SK-N-SH (cell line): ENCODE measurements at regions of chr1 and their contacts with region 1.

Region 1: DNA sequence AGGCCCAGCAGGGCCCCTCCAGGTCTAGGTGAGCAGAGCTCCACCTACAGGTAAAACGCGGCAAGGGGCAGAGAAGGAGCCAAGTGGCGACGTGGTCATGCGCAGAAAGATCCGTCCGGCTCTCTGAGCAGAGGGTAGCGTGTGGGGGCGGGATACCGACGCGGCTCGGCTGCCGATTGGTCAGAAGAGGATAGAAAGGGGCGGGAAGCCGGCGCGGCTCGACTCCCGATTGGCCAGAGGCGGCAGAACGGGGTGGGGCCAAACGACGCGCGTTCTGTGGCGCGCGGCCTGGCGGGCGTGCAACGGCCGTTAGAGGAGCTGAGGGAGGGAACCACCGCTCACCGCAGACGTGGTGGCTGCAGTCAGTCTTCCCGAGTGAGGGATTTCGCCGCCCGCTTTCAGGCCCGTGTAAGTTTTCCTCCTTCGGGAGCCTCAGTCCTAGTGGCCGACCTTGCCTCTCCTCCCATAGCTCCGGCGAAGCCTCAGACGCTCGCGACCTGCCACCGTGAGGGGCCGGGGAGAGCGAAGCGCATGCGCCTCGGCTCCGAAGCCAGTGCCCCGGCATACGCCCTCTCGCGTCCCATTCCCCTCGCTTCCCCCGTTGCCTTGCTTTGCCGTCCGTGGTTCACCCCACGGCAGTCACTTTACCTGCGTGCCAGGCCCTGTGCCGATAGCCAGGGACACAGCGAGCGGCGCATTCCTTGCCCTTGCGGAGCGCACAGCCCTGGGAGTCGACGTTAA is at the start of gene CEP85:
- DNase-seq: peak; percentile 99
- H3K4me3 ChIP-seq: peak within 1 kb of the TSS; percentile 86 to 99
- H3K27ac ChIP-seq: peak within 1 kb of the TSS; percentile 72 to 86
- H3K4me1 ChIP-seq: peaks cover 6 to 10% of the 10 kb centered on the region in 2 experiments; a peak in 2 of 4 replicates
- H3K27me3 ChIP-seq: no peaks in the 10 kb centered on the region
- CTCF ChIP-seq: peak; percentile 83
- EP300 ChIP-seq: no peak
- RAD21 ChIP-seq: peak; percentile 69
- polyA plus RNA-seq, gene CEP85: 12.1 and 16.6 TPM in 2 replicates

Region 2: DNA sequence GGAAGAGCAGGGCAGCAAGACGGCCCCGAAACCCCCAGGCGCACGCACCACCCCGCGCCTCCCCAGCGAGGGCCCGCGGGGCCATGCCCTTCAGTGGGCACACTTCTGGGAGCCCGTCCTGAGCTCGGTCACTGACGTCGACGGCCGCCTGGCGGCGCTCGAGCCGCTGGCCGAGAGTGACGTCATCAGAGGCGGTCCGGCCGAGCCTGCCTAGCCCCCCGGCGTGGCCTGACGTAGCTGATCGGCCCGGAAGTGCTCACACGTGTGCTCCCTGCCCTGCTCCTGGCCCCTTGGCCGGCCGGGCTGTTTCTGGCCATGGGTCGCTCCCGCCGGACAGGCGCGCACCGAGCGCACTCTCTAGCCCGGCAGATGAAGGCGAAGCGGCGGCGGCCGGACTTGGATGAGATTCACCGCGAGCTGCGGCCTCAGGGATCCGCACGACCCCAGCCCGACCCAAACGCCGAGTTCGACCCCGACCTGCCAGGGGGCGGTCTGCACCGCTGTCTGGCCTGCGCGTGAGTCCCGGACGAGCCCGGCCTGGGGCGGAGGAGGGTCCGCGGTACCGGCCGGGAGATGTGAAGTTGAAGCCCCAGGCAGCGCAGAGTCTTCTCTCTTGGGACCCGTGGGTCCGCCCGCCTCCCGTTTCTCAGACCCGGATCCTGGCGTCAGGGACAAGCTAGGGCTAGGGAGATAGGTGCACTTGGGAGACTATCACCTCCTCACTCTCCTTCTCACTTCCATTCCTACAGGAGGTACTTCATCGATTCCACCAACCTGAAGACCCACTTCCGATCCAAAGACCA is 64.2 kb before region 1 on chr1 and contains the start of gene ZNF593:
- CTCF ChIA-PET with region 1: interaction called, 28 read pairs
- POLR2A ChIA-PET with region 1: interaction called, 3 read pairs
- DNase-seq: peak; percentile 99
- H3K4me3 ChIP-seq: peak within 1 kb of the TSS; percentile 85 to 98
- H3K27ac ChIP-seq: peak within 1 kb of the TSS; percentile 48 to 54; a peak in 3 of 4 replicates
- H3K4me1 ChIP-seq: peaks cover 0 to 18% of the 10 kb centered on the region in 2 experiments; a peak in 2 of 4 replicates
- H3K27me3 ChIP-seq: no peaks in the 10 kb centered on the region
- CTCF ChIP-seq: peak; percentile 78
- EP300 ChIP-seq: no peak
- RAD21 ChIP-seq: peak; percentile 47; the same call in 1 of the 2 replicates
- polyA plus RNA-seq, gene ZNF593: 58.7 and 64.8 TPM in 2 replicates

Region 3: GRCh38 chr1:26203642-26204318 is 30.3 kb before region 1 on chr1:
- CTCF ChIA-PET with region 1: interaction called, 12 read pairs
- POLR2A ChIA-PET with region 1: no interaction called
- DNase-seq: no peak
- H3K4me3 ChIP-seq: no peak overlapping the region
- H3K27ac ChIP-seq: no peak overlapping the region
- H3K4me1 ChIP-seq: no peaks in the 10 kb centered on the region
- H3K27me3 ChIP-seq: no peaks in the 10 kb centered on the region; the same call in 1 of the 2 replicates
- CTCF ChIP-seq: no peak
- EP300 ChIP-seq: no peak
- RAD21 ChIP-seq: no peak

Region 4: DNA sequence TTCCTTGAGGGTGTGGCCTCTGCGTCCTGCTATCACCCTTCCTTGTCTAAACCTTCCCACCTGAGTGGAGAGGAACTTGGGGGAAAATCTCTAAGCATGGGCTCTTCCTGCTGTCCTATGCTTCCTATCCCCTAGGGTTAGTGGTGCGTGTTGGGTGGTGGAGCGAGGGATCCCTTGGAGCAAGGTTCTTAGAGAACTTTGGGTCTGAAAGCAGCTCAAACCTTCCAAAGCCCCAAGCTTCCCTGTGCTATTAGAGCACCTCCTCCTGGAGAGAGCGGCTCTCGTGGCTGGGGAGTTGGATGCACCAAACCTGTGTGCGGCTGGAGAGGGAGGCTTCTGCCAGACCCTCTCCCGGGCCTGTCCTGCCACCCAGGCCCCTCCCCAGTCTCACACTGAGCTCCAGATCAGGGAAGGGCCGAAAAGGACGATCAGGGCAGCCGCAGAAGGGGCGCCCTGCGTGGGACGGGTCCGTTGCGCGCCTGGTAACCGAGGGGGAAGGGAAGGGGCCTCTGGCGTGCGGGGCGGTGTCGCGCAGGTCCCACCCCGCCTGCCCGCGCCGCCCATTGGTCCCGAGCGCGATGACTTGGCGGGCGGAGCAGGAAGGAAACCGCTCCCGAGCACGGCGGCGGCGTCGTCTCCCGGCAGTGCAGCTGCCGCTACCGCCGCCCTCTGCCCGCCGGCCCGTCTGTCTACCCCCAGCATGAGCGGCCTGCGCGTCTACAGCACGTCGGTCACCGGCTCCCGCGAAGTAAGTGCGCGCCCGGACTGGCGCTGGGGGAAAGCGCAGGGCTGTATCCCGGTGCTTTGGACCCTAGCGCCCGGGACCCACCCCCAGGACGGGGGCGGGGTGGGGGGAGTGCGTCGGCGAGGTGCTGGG is 45.6 kb after region 1 on chr1 and contains the start of gene SH3BGRL3:
- CTCF ChIA-PET with region 1: interaction called, 13 read pairs
- POLR2A ChIA-PET with region 1: no interaction called
- DNase-seq: peak; percentile 96
- H3K4me3 ChIP-seq: peak within 1 kb of the TSS; percentile 85 to 95
- H3K27ac ChIP-seq: peak within 1 kb of the TSS; percentile 76 to 87
- H3K4me1 ChIP-seq: peaks cover 36 to 71% of the 10 kb centered on the region in 2 experiments; a peak in 3 of 4 replicates
- H3K27me3 ChIP-seq: no peaks in the 10 kb centered on the region
- CTCF ChIP-seq: peak; percentile 62
- EP300 ChIP-seq: no peak
- RAD21 ChIP-seq: peak; percentile 19; the same call in 1 of the 2 replicates
- polyA plus RNA-seq, gene SH3BGRL3: 131 and 202 TPM in 2 replicates

Region 5: GRCh38 chr1:26321315-26322041 is 87.4 kb after region 1 on chr1:
- CTCF ChIA-PET with region 1: interaction called, 12 read pairs
- POLR2A ChIA-PET with region 1: no interaction called
- DNase-seq: peak; percentile 91
- H3K4me3 ChIP-seq: peak overlapping the region in 1 of 2 experiments; percentile 17; a peak in 1 of 4 replicates
- H3K27ac ChIP-seq: no peak overlapping the region
- H3K4me1 ChIP-seq: peaks cover 0 to 3% of the 10 kb centered on the region in 2 experiments; a peak in 1 of 4 replicates
- H3K27me3 ChIP-seq: no peaks in the 10 kb centered on the region
- CTCF ChIP-seq: peak; percentile 88
- EP300 ChIP-seq: no peak
- RAD21 ChIP-seq: peak; percentile 92

Region 6: DNA sequence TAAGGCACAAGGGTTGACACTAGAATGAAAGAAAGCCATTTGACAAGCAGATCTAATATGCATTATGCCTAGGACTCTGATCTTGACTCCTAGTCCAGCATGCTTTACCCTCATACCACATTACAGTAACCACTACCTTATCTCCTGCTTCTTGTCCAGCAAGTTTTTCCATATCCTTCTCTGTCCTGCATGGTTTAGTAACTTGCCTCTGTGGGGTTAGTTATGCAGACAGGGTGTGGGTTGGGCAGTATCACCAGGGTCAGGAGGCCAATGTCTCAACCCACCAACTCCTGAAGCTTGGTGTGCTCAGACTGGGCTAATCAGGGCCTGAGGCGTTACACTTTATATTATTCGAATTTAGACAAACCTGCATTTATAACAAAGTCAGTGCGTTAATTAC is 216.8 kb after region 1 on chr1:
- CTCF ChIA-PET with region 1: no interaction called
- POLR2A ChIA-PET with region 1: no interaction called
- DNase-seq: no peak
- H3K4me3 ChIP-seq: no peak overlapping the region
- H3K27ac ChIP-seq: no peak overlapping the region
- H3K4me1 ChIP-seq: no peaks in the 10 kb centered on the region
- H3K27me3 ChIP-seq: no peaks in the 10 kb centered on the region
- CTCF ChIP-seq: no peak
- EP300 ChIP-seq: no peak
- RAD21 ChIP-seq: no peak